ENCODE measurements at regions of chr3 and their contacts with region 1.

Region 1: DNA sequence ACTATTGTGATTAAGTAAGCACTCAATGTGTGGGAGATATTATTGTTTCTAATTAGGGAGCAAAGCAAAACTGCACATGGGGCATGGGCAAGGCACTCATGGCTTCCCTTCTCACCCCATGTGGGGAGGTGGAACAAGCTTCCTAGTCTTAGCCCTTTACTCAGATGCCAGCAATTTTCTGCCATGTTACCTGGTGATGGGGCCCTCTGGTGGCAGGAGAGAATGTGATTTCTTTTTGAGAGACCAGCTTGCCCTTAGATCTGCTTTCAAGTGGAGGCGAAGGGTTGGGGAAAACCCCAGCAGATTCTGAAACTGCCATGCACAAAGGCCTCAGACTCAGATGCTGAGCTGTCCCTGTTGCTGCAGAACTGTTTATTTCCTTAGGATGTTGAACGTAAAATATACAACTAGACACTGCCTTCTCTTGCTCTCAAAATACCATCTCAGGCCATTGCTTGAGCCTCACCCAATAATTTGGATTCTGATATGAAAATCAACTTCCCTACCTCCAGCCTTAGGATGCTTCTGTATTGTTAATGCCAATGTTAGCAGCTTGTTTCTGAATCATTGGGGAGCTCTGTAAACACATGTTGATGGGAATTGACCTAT is 130.2 kb upstream of the TPRG1 start:
- DNase-seq: peak; percentile 73
- H3K4me3 ChIP-seq: no peak overlapping the region
- H3K27ac ChIP-seq: no peak overlapping the region
- H3K4me1 ChIP-seq: no peaks in the 10 kb centered on the region
- H3K27me3 ChIP-seq: no peaks in the 10 kb centered on the region
- CTCF ChIP-seq: peak; percentile 64 to 70

Region 2: GRCh38 chr3:188962253-188963247 is 79.0 kb before region 1 on chr3:
- CTCF ChIA-PET with region 1: no interaction called
- dilution Hi-C with region 1: loop called (anchors 5 kb)
- in situ Hi-C with region 1: no loop called
- intact Hi-C with region 1: no loop called
- DNase-seq: peak; percentile 59
- H3K4me3 ChIP-seq: no peak overlapping the region
- H3K27ac ChIP-seq: no peak overlapping the region
- H3K4me1 ChIP-seq: peaks cover 20% of the 10 kb centered on the region
- H3K27me3 ChIP-seq: no peaks in the 10 kb centered on the region
- CTCF ChIP-seq: no peak

Region 3: GRCh38 chr3:189056646-189057335 is 15.2 kb after region 1 on chr3:
- CTCF ChIA-PET with region 1: no interaction called
- dilution Hi-C with region 1: no loop called
- in situ Hi-C with region 1: no loop called
- intact Hi-C with region 1: no loop called
- DNase-seq: no peak
- H3K4me3 ChIP-seq: no peak overlapping the region
- H3K27ac ChIP-seq: no peak overlapping the region
- H3K4me1 ChIP-seq: no peaks in the 10 kb centered on the region
- H3K27me3 ChIP-seq: peaks cover 9% of the 10 kb centered on the region
- CTCF ChIP-seq: no peak

Measured in mammary epithelial cell (primary cell).